B cell (primary cell): ENCODE measurements at regions of chr10 and their contacts with region 1.

Region 1: GRCh38 chr10:90862908-90863514 is 5.2 kb upstream of the HTR7 start:
- DNase-seq: peak; percentile 36
- ATAC-seq: no peak
- H3K4me3 ChIP-seq: no peak overlapping the region
- H3K4me3 Mint-ChIP-seq: no peak overlapping the region
- H3K27ac ChIP-seq: no peak overlapping the region
- H3K27ac Mint-ChIP-seq: no peak overlapping the region
- H3K4me1 ChIP-seq: peaks cover 4 to 5% of the 10 kb centered on the region in 2 donors
- H3K4me1 Mint-ChIP-seq: peaks cover 4% of the 10 kb centered on the region
- H3K27me3 ChIP-seq: peaks cover 0 to 17% (median 10%) of the 10 kb centered on the region in 4 experiments
- H3K27me3 Mint-ChIP-seq: peaks cover 35% of the 10 kb centered on the region
- CTCF ChIP-seq: peak; percentile 86

Region 2: DNA sequence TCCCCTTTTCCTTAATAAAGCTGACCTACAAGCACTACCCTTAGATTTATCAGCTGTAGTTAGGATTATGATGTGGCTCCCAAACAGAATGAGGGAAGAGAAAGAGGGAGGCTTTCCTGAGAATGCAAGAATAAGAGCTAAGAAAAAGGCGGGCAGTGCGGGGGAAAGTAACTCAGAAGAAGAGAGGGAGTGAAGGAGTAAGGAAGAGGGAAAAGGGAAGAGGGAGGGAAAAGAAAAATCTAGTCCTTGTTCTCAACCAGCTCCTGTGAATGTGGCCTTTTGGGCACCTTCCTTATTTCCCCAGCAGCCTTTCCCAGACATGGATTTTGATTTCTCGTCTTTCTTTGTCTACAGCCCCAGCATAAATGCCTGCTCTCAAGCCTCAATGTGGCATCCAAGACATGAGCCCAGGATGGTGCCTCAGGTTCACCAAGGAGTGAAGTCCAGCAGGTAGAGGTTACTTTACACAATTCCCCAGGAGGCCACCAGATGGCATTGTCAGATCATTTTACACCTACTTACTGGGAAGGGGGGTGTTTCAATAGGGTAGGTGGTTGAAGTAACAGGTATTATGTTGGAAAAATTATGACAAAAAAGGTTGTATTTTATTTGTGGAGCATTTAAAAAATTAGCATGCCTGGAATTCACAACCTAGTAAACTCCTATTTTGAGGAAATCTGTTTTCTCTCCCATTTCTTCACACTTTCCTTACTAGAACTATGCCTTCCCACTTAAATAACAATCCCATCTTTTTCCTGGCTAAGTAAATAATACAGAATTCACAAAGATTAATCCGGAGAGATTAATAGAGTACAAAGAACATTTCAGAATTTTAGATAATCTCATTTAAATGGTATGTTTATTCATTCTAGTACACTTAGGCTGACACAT is 111.7 kb before region 1 on chr10:
- CTCF ChIA-PET with region 1: interaction called, 33 read pairs
- POLR2A ChIA-PET with region 1: no interaction called
- intact Hi-C with region 1: loop called (anchors 1 kb)
- DNase-seq: peak; percentile 62
- ATAC-seq: no peak
- H3K4me3 ChIP-seq: no peak overlapping the region
- H3K4me3 Mint-ChIP-seq: no peak overlapping the region
- H3K27ac ChIP-seq: no peak overlapping the region
- H3K27ac Mint-ChIP-seq: no peak overlapping the region
- H3K4me1 ChIP-seq: peaks cover 0 to 6% of the 10 kb centered on the region in 2 donors
- H3K4me1 Mint-ChIP-seq: peaks cover 3% of the 10 kb centered on the region
- H3K27me3 ChIP-seq: peaks cover 0 to 4% (median 0%) of the 10 kb centered on the region in 4 experiments
- H3K27me3 Mint-ChIP-seq: peaks cover 44% of the 10 kb centered on the region
- CTCF ChIP-seq: peak; percentile 77

Region 3: GRCh38 chr10:90834326-90834725 is 28.7 kb before region 1 on chr10:
- CTCF ChIA-PET with region 1: no interaction called
- POLR2A ChIA-PET with region 1: no interaction called
- intact Hi-C with region 1: no loop called
- DNase-seq: no peak
- ATAC-seq: no peak
- H3K4me3 ChIP-seq: no peak overlapping the region
- H3K4me3 Mint-ChIP-seq: no peak overlapping the region
- H3K27ac ChIP-seq: no peak overlapping the region
- H3K27ac Mint-ChIP-seq: no peak overlapping the region
- H3K4me1 ChIP-seq: no peaks in the 10 kb centered on the region
- H3K4me1 Mint-ChIP-seq: no peaks in the 10 kb centered on the region
- H3K27me3 ChIP-seq: no peaks in the 10 kb centered on the region
- H3K27me3 Mint-ChIP-seq: peaks cover 17% of the 10 kb centered on the region
- CTCF ChIP-seq: no peak

Region 4: GRCh38 chr10:90879062-90879461 is 16.1 kb after region 1 on chr10:
- CTCF ChIA-PET with region 1: interaction called, 10 read pairs
- POLR2A ChIA-PET with region 1: no interaction called
- intact Hi-C with region 1: no loop called
- DNase-seq: no peak
- ATAC-seq: no peak
- H3K4me3 ChIP-seq: no peak overlapping the region
- H3K4me3 Mint-ChIP-seq: no peak overlapping the region
- H3K27ac ChIP-seq: no peak overlapping the region
- H3K27ac Mint-ChIP-seq: no peak overlapping the region
- H3K4me1 ChIP-seq: no peaks in the 10 kb centered on the region
- H3K4me1 Mint-ChIP-seq: peaks cover 2% of the 10 kb centered on the region
- H3K27me3 ChIP-seq: no peaks in the 10 kb centered on the region
- H3K27me3 Mint-ChIP-seq: no peaks in the 10 kb centered on the region
- CTCF ChIP-seq: no peak